Activated CD4-positive, alpha-beta T cell treated with anti-CD3 and anti-CD28 coated beads, Interleukin-2, amount 10 ng/mL, durations not matched to agents 24 days and 14 days (primary cell): ENCODE measurements at regions of chr6 and their contacts with region 1.

Region 1: GRCh38 chr6:106444777-106445507 is 84.4 kb downstream of the CRYBG1 start:
- DNase-seq: peak; percentile 84
- H3K4me3 Mint-ChIP-seq: no peak overlapping the region
- H3K27ac Mint-ChIP-seq: no peak overlapping the region
- H3K4me1 Mint-ChIP-seq: peaks cover 11% of the 10 kb centered on the region
- H3K27me3 Mint-ChIP-seq: peaks cover 34% of the 10 kb centered on the region

Region 2: DNA sequence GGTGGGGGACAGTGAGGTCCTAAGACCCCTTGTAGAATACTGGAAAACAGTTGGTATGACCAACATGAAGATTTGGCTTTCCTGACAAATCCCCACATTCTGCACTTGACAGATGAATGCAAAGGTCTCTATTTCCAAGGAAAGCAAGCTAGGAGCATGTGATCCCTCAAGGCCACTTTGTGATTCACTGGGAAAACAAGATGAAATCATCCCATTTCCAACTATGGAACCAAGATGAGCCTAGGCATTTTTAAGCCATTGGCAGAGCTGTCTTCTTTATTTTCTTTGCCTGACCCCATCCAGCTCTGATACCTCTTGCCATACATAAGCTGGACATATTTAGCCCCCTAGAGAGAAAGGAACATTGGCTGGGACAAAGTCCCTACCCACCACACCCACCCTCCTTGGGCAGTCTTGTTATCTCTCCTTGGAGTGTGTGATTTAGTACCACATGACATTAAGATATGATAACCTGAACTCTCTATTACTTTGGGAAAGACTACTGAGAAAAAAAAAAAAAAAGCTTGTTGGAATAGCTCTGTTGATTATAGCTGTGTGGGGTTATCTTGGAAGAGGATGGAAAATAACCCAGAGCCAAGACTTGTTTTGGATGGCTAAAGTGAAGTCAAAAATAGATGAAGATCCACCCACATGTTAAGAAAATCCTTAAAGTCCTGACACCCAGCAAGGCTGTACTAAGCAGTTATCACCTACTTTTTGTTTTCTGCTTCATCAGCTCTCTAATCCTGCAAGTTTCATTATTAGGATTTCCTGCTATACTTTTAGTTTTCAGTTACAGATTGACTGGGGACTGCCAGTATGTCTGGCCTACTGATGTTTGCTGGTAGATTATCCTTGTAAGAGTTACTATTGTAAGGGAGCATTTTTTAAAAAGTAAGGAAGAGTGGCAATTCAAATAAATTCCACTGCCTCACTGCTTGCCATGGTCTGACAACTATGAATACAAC is 952.0 kb before region 1 on chr6:
- intact Hi-C with region 1: no loop called
- DNase-seq: no peak
- H3K4me3 Mint-ChIP-seq: no peak overlapping the region
- H3K27ac Mint-ChIP-seq: peak overlapping the region; percentile 30
- H3K4me1 Mint-ChIP-seq: peaks cover 28% of the 10 kb centered on the region
- H3K27me3 Mint-ChIP-seq: peaks cover 2% of the 10 kb centered on the region

Region 3: DNA sequence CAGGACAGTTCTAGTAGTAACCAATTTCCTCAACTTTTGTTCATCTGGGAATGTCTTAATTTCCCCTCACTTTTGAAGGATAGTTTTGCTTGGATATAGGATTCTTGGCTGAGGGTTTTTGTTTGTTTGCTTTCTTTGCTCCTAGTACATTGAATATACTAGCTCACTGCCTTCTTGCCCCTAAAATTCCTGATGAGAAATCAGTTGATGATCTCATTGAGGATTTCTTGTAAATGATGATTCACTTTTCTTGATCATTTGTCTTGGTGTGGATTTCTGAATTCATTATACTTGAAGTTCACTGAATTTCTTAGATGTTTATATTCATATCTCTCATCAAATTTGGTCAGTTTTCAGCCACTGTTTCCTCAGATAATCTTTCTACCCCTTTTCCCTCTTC is 407.9 kb before region 1 on chr6:
- intact Hi-C with region 1: no loop called
- DNase-seq: no peak
- H3K4me3 Mint-ChIP-seq: peak overlapping the region; percentile 6
- H3K27ac Mint-ChIP-seq: no peak overlapping the region
- H3K4me1 Mint-ChIP-seq: peaks cover 14% of the 10 kb centered on the region
- H3K27me3 Mint-ChIP-seq: no peaks in the 10 kb centered on the region

Region 4: GRCh38 chr6:106339334-106340029 is 105.5 kb before region 1 on chr6:
- intact Hi-C with region 1: loop called (anchors 1 kb)
- DNase-seq: peak; percentile 82
- H3K4me3 Mint-ChIP-seq: no peak overlapping the region
- H3K27ac Mint-ChIP-seq: no peak overlapping the region
- H3K4me1 Mint-ChIP-seq: peaks cover 5% of the 10 kb centered on the region
- H3K27me3 Mint-ChIP-seq: peaks cover 29% of the 10 kb centered on the region